Activated CD8-positive, alpha-beta T cell treated with anti-CD3 and anti-CD28 coated beads for 36 hours (primary cell): ENCODE measurements at regions of chr17 and their contacts with region 1.

Region 1: DNA sequence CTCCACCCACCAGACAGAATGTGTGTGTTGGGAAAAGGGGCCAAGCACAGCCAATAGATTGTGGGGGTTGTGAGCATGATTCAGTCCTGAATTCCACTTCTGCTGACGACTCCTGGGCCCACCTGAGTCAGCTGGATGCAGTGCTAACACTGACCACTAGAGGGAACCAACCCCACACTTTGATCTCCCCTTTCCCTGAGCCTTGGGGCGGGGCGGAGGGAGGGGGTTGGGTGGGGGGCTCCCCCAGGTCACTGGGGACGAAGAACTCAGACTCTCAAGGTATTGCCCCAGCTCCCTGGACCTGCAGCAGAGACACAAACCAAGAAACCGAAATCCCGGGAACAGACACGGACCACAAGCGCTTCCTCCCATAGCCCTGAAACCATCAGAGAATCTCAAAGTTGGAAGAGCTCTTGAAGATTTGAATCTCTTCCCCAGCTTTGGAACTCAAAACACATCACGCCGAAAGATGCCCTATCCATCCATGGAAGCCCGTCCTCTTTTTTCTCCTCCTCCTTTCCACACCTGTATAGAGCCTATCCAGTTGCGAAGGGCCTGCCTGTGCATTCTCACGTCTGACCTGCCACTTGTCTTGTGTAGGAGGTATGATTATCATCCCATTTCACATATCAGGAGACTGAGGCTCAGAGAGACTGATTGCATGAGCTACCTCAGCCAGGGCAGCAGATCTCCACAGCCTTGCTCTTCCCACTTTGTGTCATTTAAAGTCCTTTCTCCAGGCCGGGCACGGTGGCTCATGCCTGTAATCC is 784 bp upstream of the CSHL1 start:
- DNase-seq: peak; percentile 80
- ATAC-seq: peak; percentile 95
- H3K4me3 Mint-ChIP-seq: no peak overlapping the region
- H3K27ac Mint-ChIP-seq: no peak overlapping the region
- H3K4me1 Mint-ChIP-seq: no peaks in the 10 kb centered on the region
- H3K27me3 Mint-ChIP-seq: no peaks in the 10 kb centered on the region
- CTCF ChIP-seq: peak; percentile 88

Region 2: GRCh38 chr17:63954402-63955063 is 42.7 kb after region 1 on chr17:
- CTCF ChIA-PET with region 1: interaction called, 11 read pairs
- POLR2A ChIA-PET with region 1: no interaction called
- intact Hi-C with region 1: no loop called
- DNase-seq: peak; percentile 77
- ATAC-seq: peak; percentile 83
- H3K4me3 Mint-ChIP-seq: no peak overlapping the region
- H3K27ac Mint-ChIP-seq: peak overlapping the region; percentile 79
- H3K4me1 Mint-ChIP-seq: peaks cover 17% of the 10 kb centered on the region
- H3K27me3 Mint-ChIP-seq: no peaks in the 10 kb centered on the region
- CTCF ChIP-seq: no peak

Region 3: DNA sequence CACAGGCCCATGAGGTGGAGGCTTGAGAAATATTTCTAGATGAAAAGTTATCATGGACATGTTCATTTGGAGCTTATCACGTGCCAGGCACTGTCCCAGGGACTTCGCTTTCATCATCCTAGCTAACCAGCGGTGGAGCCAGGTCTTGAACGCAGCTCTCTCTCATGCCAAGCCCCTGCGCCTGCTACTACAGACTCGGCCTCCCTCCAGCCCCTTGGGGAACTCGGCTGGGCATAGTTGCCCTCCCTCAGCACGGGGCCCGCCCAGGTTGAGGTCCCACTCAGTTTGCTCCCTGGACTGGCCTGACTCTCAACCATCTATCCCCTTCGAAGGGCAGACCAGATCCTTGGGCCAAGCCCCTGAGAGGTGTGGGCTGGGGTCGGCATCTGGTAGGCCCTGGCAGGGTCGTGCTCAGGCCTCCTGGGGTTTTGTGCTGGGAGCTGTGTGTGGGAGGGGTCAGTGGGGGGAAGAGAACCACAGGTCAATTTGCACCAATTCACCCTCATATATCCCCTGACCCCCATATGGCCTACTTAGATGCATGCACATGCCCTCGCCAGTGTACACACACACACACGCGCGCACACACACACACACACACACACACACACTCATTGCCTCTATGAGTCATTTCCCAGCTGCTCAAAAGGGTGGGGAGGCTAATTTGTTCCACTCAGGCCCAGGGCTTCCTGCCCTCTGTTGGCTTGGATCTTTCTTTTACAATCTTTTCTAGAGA is 73.0 kb after region 1 on chr17:
- CTCF ChIA-PET with region 1: interaction called, 126 read pairs
- POLR2A ChIA-PET with region 1: interaction called, 4 read pairs
- intact Hi-C with region 1: loop called (anchors 5 kb)
- DNase-seq: peak; percentile 92
- ATAC-seq: peak; percentile 97
- H3K4me3 Mint-ChIP-seq: no peak overlapping the region
- H3K27ac Mint-ChIP-seq: peak overlapping the region; percentile 87
- H3K4me1 Mint-ChIP-seq: peaks cover 27% of the 10 kb centered on the region
- H3K27me3 Mint-ChIP-seq: no peaks in the 10 kb centered on the region
- CTCF ChIP-seq: no peak